ENCODE measurements at regions of chr19 and their contacts with region 1.

Region 1: GRCh38 chr19:48738557-48739399 is 1.6 kb downstream of the RASIP1 start:
- DNase-seq: peak; percentile 53 to 91
- H3K4me3 ChIP-seq: peak overlapping the region; percentile 55 to 77
- H3K27ac ChIP-seq: peak overlapping the region in 1 of 2 donors; percentile 24
- H3K4me1 ChIP-seq: peaks cover 5 to 9% of the 10 kb centered on the region in 2 donors
- H3K27me3 ChIP-seq: no peaks in the 10 kb centered on the region
- CTCF ChIP-seq: peak in 2 of 3 experiments; percentile 11 to 62

Region 2: GRCh38 chr19:48674921-48675824 is 63.6 kb before region 1 on chr19:
- intact Hi-C with region 1: loop called (anchors 2 kb)
- DNase-seq: peak; percentile 20 to 90
- H3K4me3 ChIP-seq: no peak overlapping the region
- H3K27ac ChIP-seq: no peak overlapping the region
- H3K4me1 ChIP-seq: peaks cover 0 to 2% of the 10 kb centered on the region in 2 donors
- H3K27me3 ChIP-seq: no peaks in the 10 kb centered on the region
- CTCF ChIP-seq: peak; percentile 84 to 89 (median 86)

Region 3: GRCh38 chr19:48720613-48721296 is 18.0 kb before region 1 on chr19:
- intact Hi-C with region 1: loop called (anchors 2 kb)
- DNase-seq: peak; percentile 98 to 100
- H3K4me3 ChIP-seq: peak overlapping the region; percentile 48 to 65
- H3K27ac ChIP-seq: peak overlapping the region; percentile 77 to 93
- H3K4me1 ChIP-seq: peaks cover 3 to 19% of the 10 kb centered on the region in 2 donors
- H3K27me3 ChIP-seq: no peaks in the 10 kb centered on the region
- CTCF ChIP-seq: no peak

Measured in ascending aorta (tissue), 2 donors.